ENCODE measurements at regions of chr5 and their contacts with region 1.

Region 1: DNA sequence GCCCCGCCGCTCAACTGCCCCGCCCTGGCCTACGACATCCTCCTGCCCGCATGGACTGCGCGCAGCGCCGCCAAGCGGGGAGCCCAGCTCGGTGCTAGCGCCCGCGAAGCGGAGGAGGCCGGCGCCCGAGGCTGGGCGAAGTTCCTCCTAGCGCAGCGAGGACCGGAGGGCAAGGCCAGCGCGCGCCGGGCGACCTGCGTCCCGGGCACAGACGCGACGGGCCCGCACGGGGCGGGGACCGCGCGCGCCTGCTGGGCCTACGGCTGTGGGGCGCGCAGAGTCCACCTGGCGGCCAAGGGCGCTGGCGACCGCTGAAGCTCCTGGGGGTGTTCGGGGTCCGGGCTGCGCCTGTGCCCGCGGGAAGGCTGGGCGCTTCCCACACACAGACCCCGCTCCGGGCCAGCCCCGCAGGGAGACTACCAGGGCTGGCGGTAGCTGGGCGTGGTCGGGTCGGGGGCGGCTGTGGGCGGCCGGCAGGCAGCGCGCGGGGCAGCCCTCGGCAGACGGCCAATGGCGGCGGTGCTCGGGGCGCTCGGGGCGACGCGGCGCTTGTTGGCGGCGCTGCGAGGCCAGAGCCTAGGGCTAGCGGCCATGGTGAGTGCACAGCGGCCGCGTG is at the start of gene PCBD2:
- DNase-seq: peak; percentile 89
- H3K4me3 ChIP-seq: peak within 1 kb of the TSS; percentile 60 to 90 (median 80)
- H3K27ac ChIP-seq: peak within 1 kb of the TSS; percentile 80
- H3K4me1 ChIP-seq: no peaks in the 10 kb centered on the region
- H3K27me3 ChIP-seq: no peaks in the 10 kb centered on the region
- CTCF ChIP-seq: peak; percentile 74 to 95
- total RNA-seq, gene PCBD2: 4.5 to 8.3 TPM

Region 2: GRCh38 chr5:134436523-134437339 is 468.0 kb before region 1 on chr5:
- CTCF ChIA-PET with region 1: no interaction called
- dilution Hi-C with region 1: no loop called
- in situ Hi-C with region 1: no loop called
- intact Hi-C with region 1: loop called (anchors 5 kb)
- DNase-seq: peak; percentile 55
- H3K4me3 ChIP-seq: no peak overlapping the region
- H3K27ac ChIP-seq: peak overlapping the region; percentile 95
- H3K4me1 ChIP-seq: peaks cover 55% of the 10 kb centered on the region
- H3K27me3 ChIP-seq: no peaks in the 10 kb centered on the region
- CTCF ChIP-seq: no peak

Region 3: DNA sequence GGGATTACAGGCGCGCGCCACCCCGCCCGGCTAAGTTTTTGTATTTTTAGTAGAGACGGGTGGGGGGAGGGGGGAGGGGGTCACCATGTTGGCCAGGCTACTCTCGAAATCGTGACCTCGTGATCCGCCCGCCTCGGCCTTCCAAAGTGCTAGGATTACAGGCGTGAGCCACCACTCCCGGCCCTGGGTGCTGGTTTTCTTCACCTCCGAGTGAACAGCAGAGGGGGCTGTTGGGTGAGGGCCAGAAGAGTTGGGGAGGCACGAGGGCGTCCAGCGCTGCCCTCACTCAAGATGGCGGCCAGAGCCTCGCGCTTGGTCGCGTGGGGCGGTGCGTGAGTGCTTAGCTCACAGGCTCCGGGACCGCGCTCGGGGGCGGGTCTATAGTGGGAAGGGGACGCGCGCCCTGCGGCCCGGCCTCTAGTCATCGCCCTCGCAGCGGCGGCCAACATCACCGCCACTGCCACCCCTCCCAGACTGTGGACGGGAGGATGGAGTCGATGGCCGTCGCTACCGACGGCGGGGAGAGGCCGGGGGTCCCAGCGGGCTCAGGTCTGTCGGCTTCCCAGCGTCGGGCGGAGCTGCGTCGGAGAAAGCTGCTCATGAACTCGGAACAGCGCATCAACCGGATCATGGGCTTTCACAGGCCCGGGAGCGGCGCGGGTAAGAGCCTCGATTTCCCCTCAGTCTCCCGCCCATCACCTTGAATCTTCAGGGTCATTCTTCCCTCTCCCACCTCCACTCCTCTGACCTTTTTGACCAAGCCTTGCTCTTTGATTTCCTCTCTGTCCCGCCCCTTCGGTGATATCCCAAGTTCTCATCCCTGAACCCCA is 166.4 kb before region 1 on chr5 and contains the start of gene CAMLG:
- CTCF ChIA-PET with region 1: interaction called, 17 read pairs
- dilution Hi-C with region 1: no loop called
- in situ Hi-C with region 1: no loop called
- intact Hi-C with region 1: loop called (anchors 2 kb)
- DNase-seq: peak; percentile 96
- H3K4me3 ChIP-seq: peak within 1 kb of the TSS; percentile 47 to 92 (median 73)
- H3K27ac ChIP-seq: peak within 1 kb of the TSS; percentile 70
- H3K4me1 ChIP-seq: peaks cover 5% of the 10 kb centered on the region
- H3K27me3 ChIP-seq: no peaks in the 10 kb centered on the region
- CTCF ChIP-seq: peak; percentile 29 to 65
- total RNA-seq, gene CAMLG: 21.6 to 25.0 TPM

Region 4: GRCh38 chr5:134803821-134804220 is 100.9 kb before region 1 on chr5:
- CTCF ChIA-PET with region 1: no interaction called
- dilution Hi-C with region 1: no loop called
- in situ Hi-C with region 1: no loop called
- intact Hi-C with region 1: loop called (anchors 2 kb)
- DNase-seq: no peak
- H3K4me3 ChIP-seq: no peak overlapping the region
- H3K27ac ChIP-seq: no peak overlapping the region
- H3K4me1 ChIP-seq: peaks cover 6% of the 10 kb centered on the region
- H3K27me3 ChIP-seq: no peaks in the 10 kb centered on the region
- CTCF ChIP-seq: no peak

Region 5: GRCh38 chr5:134873987-134874830 is 30.5 kb before region 1 on chr5 and contains the start of gene TXNDC15:
- CTCF ChIA-PET with region 1: no interaction called
- dilution Hi-C with region 1: no loop called
- in situ Hi-C with region 1: no loop called
- intact Hi-C with region 1: loop called (anchors 1 kb)
- DNase-seq: peak; percentile 81
- H3K4me3 ChIP-seq: peak within 1 kb of the TSS; percentile 63 to 96 (median 68)
- H3K27ac ChIP-seq: peak within 1 kb of the TSS; percentile 75
- H3K4me1 ChIP-seq: peaks cover 13% of the 10 kb centered on the region
- H3K27me3 ChIP-seq: no peaks in the 10 kb centered on the region
- CTCF ChIP-seq: no peak
- total RNA-seq, gene TXNDC15: 30.4 to 43.0 TPM

Region 6: GRCh38 chr5:135191084-135191826 is 286.5 kb after region 1 on chr5:
- CTCF ChIA-PET with region 1: no interaction called
- dilution Hi-C with region 1: no loop called
- in situ Hi-C with region 1: loop called in 1 of 2 experiments (anchors 25 kb)
- intact Hi-C with region 1: loop called (anchors 1 kb)
- DNase-seq: peak; percentile 63
- H3K4me3 ChIP-seq: peak overlapping the region in 2 of 3 experiments; percentile 35 to 54
- H3K27ac ChIP-seq: no peak overlapping the region
- H3K4me1 ChIP-seq: peaks cover 6% of the 10 kb centered on the region
- H3K27me3 ChIP-seq: no peaks in the 10 kb centered on the region
- CTCF ChIP-seq: peak; percentile 94 to 98

Measured in mammary epithelial cell (primary cell).